ENCODE measurements at regions of chrX and their contacts with region 1.

Region 1: DNA sequence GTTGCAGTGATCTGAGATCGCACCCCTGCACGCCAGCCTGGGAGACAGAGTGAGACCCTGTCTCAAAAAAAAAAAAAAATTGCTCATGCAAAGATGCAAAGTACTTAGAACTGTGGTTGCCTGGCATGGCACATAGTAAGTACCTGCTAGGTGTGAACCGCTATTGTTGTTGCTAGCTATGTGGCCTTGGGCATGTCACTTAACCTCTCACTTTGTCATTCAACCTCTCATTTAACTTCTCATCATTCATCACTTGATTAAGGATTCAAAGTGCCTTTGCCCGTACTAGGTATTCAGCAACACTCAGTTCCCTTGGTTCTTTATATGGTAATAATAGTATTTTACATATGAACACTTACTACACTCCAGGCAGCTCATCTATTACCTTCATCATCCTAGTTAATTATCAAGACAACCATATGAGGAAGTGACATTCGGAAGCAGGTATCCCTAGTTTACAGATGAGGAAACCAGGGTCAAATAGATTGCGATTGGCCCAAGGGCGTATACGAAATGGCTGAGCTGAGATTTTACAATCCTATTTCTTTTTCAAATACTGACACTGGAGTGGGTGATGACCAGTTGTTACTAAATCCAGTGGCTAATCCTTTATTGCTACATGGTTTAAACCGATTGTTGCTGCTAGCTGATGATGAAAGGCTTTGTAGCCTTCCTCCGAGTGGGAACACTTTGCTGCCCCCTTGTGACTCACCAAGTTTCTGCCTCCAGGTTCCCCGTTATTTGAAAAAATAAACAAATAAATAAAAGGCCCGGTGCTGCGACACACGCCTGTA is 28.8 kb upstream of the SOWAHD start:
- DNase-seq: peak; percentile 75
- H3K4me3 ChIP-seq: no peak overlapping the region
- H3K27ac ChIP-seq: no peak overlapping the region
- H3K4me1 ChIP-seq: no peaks in the 10 kb centered on the region
- H3K27me3 ChIP-seq: no peaks in the 10 kb centered on the region
- CTCF ChIP-seq: peak; percentile 60

Region 2: GRCh38 chrX:119488749-119489148 is 240.9 kb before region 1 on chrX:
- CTCF ChIA-PET with region 1: interaction called, 12 read pairs
- POLR2A ChIA-PET with region 1: no interaction called
- intact Hi-C with region 1: loop called (anchors 5 kb)
- DNase-seq: peak; percentile 58
- H3K4me3 ChIP-seq: no peak overlapping the region
- H3K27ac ChIP-seq: no peak overlapping the region
- H3K4me1 ChIP-seq: no peaks in the 10 kb centered on the region
- H3K27me3 ChIP-seq: no peaks in the 10 kb centered on the region
- CTCF ChIP-seq: peak; percentile 66

Region 3: DNA sequence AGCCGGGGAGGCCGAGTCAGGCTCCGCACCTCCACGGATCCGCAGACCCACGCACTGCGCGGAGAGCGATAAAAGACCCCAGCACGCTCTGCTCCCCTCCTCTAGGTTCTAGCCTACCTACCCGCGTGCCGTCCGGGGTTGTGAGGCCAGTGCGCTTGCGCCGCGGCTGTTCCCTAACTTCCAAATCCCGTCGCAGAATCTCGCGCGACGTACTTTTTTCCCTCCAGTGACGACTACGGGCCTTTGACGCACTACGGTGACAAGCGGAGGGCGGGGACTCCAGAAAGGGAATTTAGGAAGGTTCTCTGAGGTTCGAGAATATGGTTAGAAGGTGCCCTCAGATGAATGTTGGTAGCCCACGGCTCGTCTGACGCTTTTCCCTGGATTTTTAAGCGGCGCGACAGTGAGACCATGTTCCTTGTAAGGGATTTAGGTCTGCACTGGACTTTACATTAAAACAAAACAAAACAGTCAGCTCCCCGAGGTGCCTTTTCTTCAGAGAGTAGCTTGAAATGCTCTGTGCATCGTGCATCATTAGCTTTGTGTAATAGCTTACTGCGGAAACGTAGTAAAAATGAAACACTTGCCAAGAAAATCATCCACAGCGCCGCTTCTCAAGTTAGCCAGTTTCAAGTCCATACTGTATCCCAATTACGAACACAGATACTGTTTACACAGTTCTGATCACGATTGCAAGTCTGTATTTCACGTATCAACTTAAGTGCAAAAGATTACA is 123.2 kb before region 1 on chrX and contains the start of gene NKRF:
- CTCF ChIA-PET with region 1: interaction called, 14 read pairs
- POLR2A ChIA-PET with region 1: no interaction called
- intact Hi-C with region 1: loop called (anchors 2 kb)
- DNase-seq: peak; percentile 95
- H3K4me3 ChIP-seq: peak within 1 kb of the TSS; percentile 69
- H3K27ac ChIP-seq: peak within 1 kb of the TSS; percentile 94
- H3K4me1 ChIP-seq: no peaks in the 10 kb centered on the region
- H3K27me3 ChIP-seq: no peaks in the 10 kb centered on the region
- CTCF ChIP-seq: no peak
- total RNA-seq, gene NKRF: 18.8 and 22.1 TPM in 2 replicates

Measured in A673 (cell line).